Naive thymus-derived CD4-positive, alpha-beta T cell (primary cell): ENCODE measurements at regions of chrX and their contacts with region 1.

Region 1: GRCh38 chrX:41923257-41923969 is at the start of gene CASK:
- DNase-seq: peak; percentile 74 to 91 (median 84)
- ATAC-seq: peak; percentile 92
- H3K4me3 ChIP-seq: peak within 1 kb of the TSS; percentile 78
- H3K4me3 Mint-ChIP-seq: peak within 1 kb of the TSS; percentile 91 to 99 (median 92)
- H3K27ac ChIP-seq: peak within 1 kb of the TSS; percentile 70
- H3K27ac Mint-ChIP-seq: peak within 1 kb of the TSS; percentile 76 to 95 (median 91)
- H3K4me1 ChIP-seq: peaks cover 5% of the 10 kb centered on the region in 2 donors
- H3K4me1 Mint-ChIP-seq: peaks cover 6 to 39% (median 29%) of the 10 kb centered on the region in 7 donors
- H3K27me3 ChIP-seq: no peaks in the 10 kb centered on the region
- H3K27me3 Mint-ChIP-seq: peaks cover 0 to 2% (median 0%) of the 10 kb centered on the region in 5 donors
- total RNA-seq, gene CASK: 31.5 to 72.4 (median 65.0) TPM

Region 2: GRCh38 chrX:41796577-41796976 is 126.8 kb before region 1 on chrX:
- CTCF ChIA-PET with region 1: no interaction called
- POLR2A ChIA-PET with region 1: no interaction called
- intact Hi-C with region 1: loop called (anchors 5 kb)
- DNase-seq: no peak
- ATAC-seq: no peak
- H3K4me3 ChIP-seq: no peak overlapping the region
- H3K4me3 Mint-ChIP-seq: no peak overlapping the region
- H3K27ac ChIP-seq: no peak overlapping the region
- H3K27ac Mint-ChIP-seq: peak overlapping the region in 2 of 9 donors; percentile 34 to 62
- H3K4me1 ChIP-seq: peaks cover 0 to 4% of the 10 kb centered on the region in 2 donors
- H3K4me1 Mint-ChIP-seq: peaks cover 6 to 34% (median 14%) of the 10 kb centered on the region in 7 donors
- H3K27me3 ChIP-seq: no peaks in the 10 kb centered on the region
- H3K27me3 Mint-ChIP-seq: no peaks in the 10 kb centered on the region

Region 3: GRCh38 chrX:41909068-41909467 is 14.3 kb before region 1 on chrX:
- CTCF ChIA-PET with region 1: no interaction called
- POLR2A ChIA-PET with region 1: no interaction called
- intact Hi-C with region 1: loop called in 1 of 2 experiments (anchors 2 kb)
- DNase-seq: peak in 5 of 9 donors; percentile 6 to 46 (median 23)
- ATAC-seq: peak; percentile 62
- H3K4me3 ChIP-seq: no peak overlapping the region
- H3K4me3 Mint-ChIP-seq: peak overlapping the region in 7 of 10 donors; percentile 16 to 52 (median 29)
- H3K27ac ChIP-seq: no peak overlapping the region
- H3K27ac Mint-ChIP-seq: peak overlapping the region in 5 of 9 donors; percentile 17 to 77 (median 49)
- H3K4me1 ChIP-seq: peaks cover 11 to 22% of the 10 kb centered on the region in 2 donors
- H3K4me1 Mint-ChIP-seq: peaks cover 5 to 50% (median 31%) of the 10 kb centered on the region in 7 donors
- H3K27me3 ChIP-seq: no peaks in the 10 kb centered on the region
- H3K27me3 Mint-ChIP-seq: no peaks in the 10 kb centered on the region

Region 4: DNA sequence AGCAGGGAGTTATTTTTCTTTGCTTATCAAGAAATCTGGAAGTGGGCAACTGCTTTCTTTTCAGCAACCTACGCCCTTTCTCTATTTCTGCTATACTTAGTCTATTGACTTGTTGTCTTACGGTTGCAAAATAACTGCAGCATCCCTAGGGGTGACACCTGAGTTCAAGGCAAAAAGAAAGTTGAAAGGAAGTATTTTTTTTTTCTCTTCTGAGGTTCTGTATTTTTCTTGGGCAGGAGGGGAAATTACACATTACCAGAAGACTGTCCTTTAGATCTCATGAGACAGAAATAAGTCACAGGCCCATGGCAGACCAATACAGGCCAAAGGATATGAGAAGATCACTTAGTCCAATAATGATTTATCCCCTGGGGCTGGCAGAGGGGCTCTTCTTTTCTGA is 204.6 kb after region 1 on chrX:
- CTCF ChIA-PET with region 1: no interaction called
- POLR2A ChIA-PET with region 1: no interaction called
- intact Hi-C with region 1: loop called in 1 of 2 experiments (anchors 5 kb)
- DNase-seq: peak in 1 of 9 donors; percentile 7
- ATAC-seq: peak; percentile 44
- H3K4me3 ChIP-seq: no peak overlapping the region
- H3K4me3 Mint-ChIP-seq: peak overlapping the region in 6 of 10 donors; percentile 2 to 72 (median 33)
- H3K27ac ChIP-seq: no peak overlapping the region
- H3K27ac Mint-ChIP-seq: peak overlapping the region in 7 of 9 donors; percentile 9 to 92 (median 62)
- H3K4me1 ChIP-seq: peaks cover 9 to 20% of the 10 kb centered on the region in 2 donors
- H3K4me1 Mint-ChIP-seq: peaks cover 13 to 73% (median 29%) of the 10 kb centered on the region in 7 donors
- H3K27me3 ChIP-seq: no peaks in the 10 kb centered on the region
- H3K27me3 Mint-ChIP-seq: no peaks in the 10 kb centered on the region

Region 5: GRCh38 chrX:42739258-42739657 is 815.8 kb after region 1 on chrX:
- CTCF ChIA-PET with region 1: no interaction called
- POLR2A ChIA-PET with region 1: no interaction called
- intact Hi-C with region 1: loop called in 1 of 2 experiments (anchors 10 kb)
- DNase-seq: peak in 5 of 9 donors; percentile 18 to 51 (median 40)
- ATAC-seq: no peak
- H3K4me3 ChIP-seq: no peak overlapping the region
- H3K4me3 Mint-ChIP-seq: peak overlapping the region in 7 of 10 donors; percentile 23 to 64 (median 36)
- H3K27ac ChIP-seq: peak overlapping the region; percentile 10
- H3K27ac Mint-ChIP-seq: peak overlapping the region in 8 of 9 donors; percentile 62 to 90 (median 80)
- H3K4me1 ChIP-seq: peaks cover 0 to 4% of the 10 kb centered on the region in 2 donors
- H3K4me1 Mint-ChIP-seq: peaks cover 0 to 31% (median 25%) of the 10 kb centered on the region in 7 donors
- H3K27me3 ChIP-seq: no peaks in the 10 kb centered on the region
- H3K27me3 Mint-ChIP-seq: no peaks in the 10 kb centered on the region

Region 6: DNA sequence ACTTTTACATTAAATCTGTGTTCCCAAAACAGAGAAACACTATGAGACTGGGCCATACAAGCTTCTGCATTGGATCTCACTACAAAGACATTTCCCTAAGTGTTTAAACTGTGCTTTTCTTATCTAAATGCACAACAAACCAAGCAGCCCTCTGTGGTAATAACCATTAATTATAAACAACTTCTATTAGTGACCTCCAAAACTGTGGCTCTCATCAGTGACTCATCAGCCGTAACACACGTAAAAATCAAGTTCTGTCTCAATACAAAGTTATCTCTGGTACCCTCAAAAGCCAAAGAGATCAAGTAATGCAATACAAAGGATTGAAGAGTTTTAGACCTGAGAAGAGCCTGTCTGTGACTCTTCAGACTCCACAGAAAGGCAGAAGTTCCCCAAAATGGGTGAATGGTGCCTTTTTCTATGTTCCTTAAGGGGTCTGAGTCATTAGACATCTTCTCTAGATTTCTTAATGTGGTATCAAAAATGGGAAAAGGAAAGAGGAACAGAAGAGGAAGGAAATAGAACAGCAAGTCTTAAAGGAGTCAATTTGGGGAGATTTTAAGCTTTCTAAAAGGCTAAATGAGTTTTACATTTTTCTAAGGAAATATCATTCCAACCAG is 1044.4 kb after region 1 on chrX:
- CTCF ChIA-PET with region 1: no interaction called
- POLR2A ChIA-PET with region 1: no interaction called
- intact Hi-C with region 1: no loop called
- DNase-seq: no peak
- ATAC-seq: no peak
- H3K4me3 ChIP-seq: no peak overlapping the region
- H3K4me3 Mint-ChIP-seq: no peak overlapping the region
- H3K27ac ChIP-seq: no peak overlapping the region
- H3K27ac Mint-ChIP-seq: peak overlapping the region in 1 of 9 donors; percentile 20
- H3K4me1 ChIP-seq: no peaks in the 10 kb centered on the region
- H3K4me1 Mint-ChIP-seq: peaks cover 0 to 7% (median 0%) of the 10 kb centered on the region in 7 donors
- H3K27me3 ChIP-seq: no peaks in the 10 kb centered on the region
- H3K27me3 Mint-ChIP-seq: no peaks in the 10 kb centered on the region